Right lobe of liver (tissue), 6 donors: ENCODE measurements at regions of chr19 and their contacts with region 1.

Region 1: DNA sequence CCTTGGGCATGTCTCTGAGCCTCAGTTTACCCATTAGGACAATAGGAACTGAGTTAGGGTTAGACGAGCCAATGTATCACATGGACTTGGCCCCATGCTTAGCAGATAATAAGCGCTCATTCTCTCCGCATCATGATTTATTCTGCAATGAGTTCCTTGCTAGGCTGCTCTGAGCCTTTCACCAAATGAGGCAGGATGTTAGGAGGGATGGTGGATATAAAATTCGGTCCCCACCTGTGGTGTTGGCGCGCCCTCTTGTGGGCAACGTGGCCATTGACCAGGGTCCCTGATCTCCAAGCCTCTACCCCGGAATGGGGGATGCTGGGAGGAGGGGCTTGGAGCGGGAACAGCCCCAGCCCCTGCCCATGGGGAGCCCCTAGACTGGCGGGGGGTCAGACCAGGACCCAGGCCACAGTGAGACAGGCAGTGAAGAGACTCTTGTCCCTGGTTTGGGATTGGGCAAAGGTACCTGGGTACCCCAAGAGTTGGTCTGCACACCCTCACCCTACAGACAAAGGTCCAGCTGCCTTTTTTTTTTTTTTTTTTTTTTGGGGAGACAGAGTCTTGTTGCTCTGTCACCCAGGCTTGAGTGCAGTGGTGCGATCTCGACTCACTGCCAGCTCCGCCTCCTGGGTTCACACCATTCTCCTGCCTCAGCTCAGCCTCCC is 43.9 kb downstream of the CERS4 start:
- DNase-seq: peak; percentile 79 to 86 (median 83)
- ATAC-seq: peak; percentile 42 to 57 (median 54)
- H3K4me3 ChIP-seq: no peak overlapping the region
- H3K27ac ChIP-seq: no peak overlapping the region
- H3K4me1 ChIP-seq: peaks cover 0 to 23% (median 10%) of the 10 kb centered on the region in 4 donors
- H3K27me3 ChIP-seq: no peaks in the 10 kb centered on the region
- CTCF ChIP-seq: peak; percentile 92 to 97 (median 94)
- POLR2A ChIP-seq: no peak

Region 2: GRCh38 chr19:7943444-7944176 is 309.4 kb before region 1 on chr19 and contains the start of gene TIMM44:
- intact Hi-C with region 1: loop called in 1 of 2 experiments (anchors 10 kb)
- DNase-seq: peak; percentile 99 to 100 (median 99)
- ATAC-seq: peak; percentile 95 to 98 (median 96)
- H3K4me3 ChIP-seq: peak within 1 kb of the TSS; percentile 74 to 94 (median 94)
- H3K27ac ChIP-seq: peak within 1 kb of the TSS; percentile 89 to 97 (median 93)
- H3K4me1 ChIP-seq: peaks cover 0 to 13% (median 0%) of the 10 kb centered on the region in 4 donors
- H3K27me3 ChIP-seq: no peaks in the 10 kb centered on the region
- CTCF ChIP-seq: no peak
- POLR2A ChIP-seq: peak; percentile 74
- total RNA-seq, gene TIMM44: 26.1 to 41.7 (median 36.9) TPM

Region 3: DNA sequence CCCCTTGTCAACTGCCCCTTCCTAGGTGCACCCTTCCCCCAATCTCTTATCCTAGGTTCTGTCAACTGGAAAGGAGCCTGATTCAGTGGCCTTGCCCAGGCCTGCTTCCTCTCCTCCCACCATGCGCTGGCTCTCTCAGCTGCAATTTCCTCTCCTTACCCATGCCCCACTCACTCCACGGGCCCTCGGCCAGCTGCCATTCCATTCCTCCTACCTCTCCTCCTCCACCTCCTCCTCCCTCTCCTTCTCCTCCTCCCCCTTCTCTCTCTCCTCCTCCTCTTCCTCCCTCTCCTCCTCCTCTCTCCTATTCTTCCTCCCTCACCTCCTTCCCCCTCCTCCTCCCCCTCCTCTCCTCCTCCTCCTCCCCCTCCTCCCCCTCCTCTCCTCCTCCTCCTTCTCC is 300.0 kb before region 1 on chr19:
- intact Hi-C with region 1: loop called (anchors 10 kb)
- DNase-seq: no peak
- ATAC-seq: peak in 1 of 4 donors; percentile 8
- H3K4me3 ChIP-seq: no peak overlapping the region
- H3K27ac ChIP-seq: no peak overlapping the region
- H3K4me1 ChIP-seq: peaks cover 0 to 7% (median 0%) of the 10 kb centered on the region in 4 donors
- H3K27me3 ChIP-seq: no peaks in the 10 kb centered on the region
- CTCF ChIP-seq: no peak
- POLR2A ChIP-seq: no peak

Region 4: DNA sequence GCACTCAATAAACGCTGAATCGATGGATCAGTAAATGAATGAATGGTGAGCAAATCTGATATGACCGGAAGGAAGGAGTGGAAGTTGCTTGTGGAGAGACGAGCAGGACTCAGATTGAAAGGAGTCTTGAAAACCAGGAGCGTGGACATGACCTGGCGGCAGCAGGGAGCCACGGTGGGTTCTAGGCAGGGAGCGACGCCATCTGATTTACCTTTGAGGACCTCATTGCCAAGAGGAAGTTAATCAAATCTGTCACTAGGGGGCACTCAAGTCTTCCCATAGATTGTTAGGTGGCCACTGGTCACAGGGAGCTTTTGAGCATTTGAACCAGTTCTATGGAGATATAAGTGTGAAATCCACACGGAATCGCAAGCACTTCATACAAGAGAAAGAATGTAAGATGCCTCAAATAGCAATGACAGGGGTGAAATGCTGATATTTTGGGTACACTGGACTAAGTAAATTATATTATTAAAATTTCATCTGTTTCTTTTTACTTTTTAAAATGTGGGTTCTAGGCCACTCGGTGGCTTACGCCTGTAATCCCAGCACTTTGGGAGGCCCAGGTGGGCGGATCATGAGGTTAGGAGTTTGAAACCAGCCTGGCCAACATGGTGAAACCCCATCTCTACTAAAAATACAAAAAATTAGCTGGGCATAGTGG is 94.5 kb before region 1 on chr19:
- intact Hi-C with region 1: loop called (anchors 2 to 10 kb)
- DNase-seq: peak in 1 of 3 donors; percentile 64
- ATAC-seq: peak; percentile 85 to 95 (median 88)
- H3K4me3 ChIP-seq: no peak overlapping the region
- H3K27ac ChIP-seq: no peak overlapping the region
- H3K4me1 ChIP-seq: peaks cover 0 to 4% (median 2%) of the 10 kb centered on the region in 4 donors
- H3K27me3 ChIP-seq: no peaks in the 10 kb centered on the region
- CTCF ChIP-seq: peak; percentile 79 to 88 (median 83)
- POLR2A ChIP-seq: no peak